Activated naive CD4-positive, alpha-beta T cell treated with anti-CD3 and anti-CD28 coated beads for 36 hours (primary cell): ENCODE measurements at regions of chr5 and their contacts with region 1.

Region 1: DNA sequence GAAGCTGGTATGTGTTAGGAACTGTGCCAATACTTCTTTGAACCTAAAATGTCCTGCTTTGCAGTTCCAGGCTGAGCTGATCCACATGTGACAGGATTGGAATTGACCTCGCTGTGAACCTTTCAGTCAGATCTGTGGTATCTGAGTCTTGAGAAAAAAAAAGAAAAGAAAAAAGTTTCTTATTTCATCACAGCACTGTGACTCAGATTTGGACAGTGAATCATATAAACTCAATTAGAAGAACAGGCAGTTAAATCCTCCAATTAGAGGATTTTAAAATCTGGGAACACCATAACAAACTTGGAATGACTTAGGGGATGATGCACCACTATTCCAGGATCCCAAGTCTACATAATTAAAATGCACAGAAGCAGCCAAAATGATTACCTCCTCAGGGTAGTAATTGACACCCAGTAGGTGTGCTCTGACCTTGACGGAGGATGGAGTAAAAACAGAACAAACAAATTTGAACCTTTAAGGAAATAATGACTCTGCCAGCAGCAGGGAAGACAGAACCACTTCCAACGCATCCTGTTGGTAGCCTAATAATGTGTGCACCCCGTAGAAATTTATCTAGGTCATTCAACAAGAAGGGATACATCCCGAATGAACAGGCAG is 57.8 kb upstream of the RAI14 start:
- DNase-seq: peak; percentile 32
- H3K4me3 Mint-ChIP-seq: no peak overlapping the region
- H3K27ac Mint-ChIP-seq: no peak overlapping the region
- H3K4me1 Mint-ChIP-seq: peaks cover 12% of the 10 kb centered on the region
- H3K27me3 Mint-ChIP-seq: peaks cover 9% of the 10 kb centered on the region

Region 2: DNA sequence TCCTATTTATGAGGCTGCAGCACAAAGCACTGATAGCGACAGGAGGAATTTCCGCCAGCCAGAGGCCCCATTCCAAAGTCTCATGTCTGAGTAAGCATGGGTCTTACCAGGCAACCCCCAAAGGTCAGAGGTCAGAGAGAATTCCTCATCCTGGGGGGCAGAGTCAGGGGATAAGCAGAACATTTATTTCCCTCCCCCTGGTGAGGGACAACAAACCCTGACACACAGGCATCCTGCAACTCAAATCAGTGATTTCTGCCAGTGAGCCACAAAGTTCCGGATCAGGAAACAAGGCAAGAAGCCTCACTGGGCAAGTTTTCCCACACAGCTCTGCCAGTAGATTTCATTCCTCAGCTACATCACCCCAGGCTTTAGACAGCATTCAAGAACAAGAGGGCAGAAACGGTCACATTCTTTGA is 743.5 kb before region 1 on chr5:
- CTCF ChIA-PET with region 1: no interaction called
- intact Hi-C with region 1: no loop called
- DNase-seq: no peak
- H3K4me3 Mint-ChIP-seq: no peak overlapping the region
- H3K27ac Mint-ChIP-seq: no peak overlapping the region
- H3K4me1 Mint-ChIP-seq: peaks cover 32% of the 10 kb centered on the region
- H3K27me3 Mint-ChIP-seq: no peaks in the 10 kb centered on the region

Region 3: GRCh38 chr5:34551911-34552433 is 46.3 kb before region 1 on chr5:
- CTCF ChIA-PET with region 1: no interaction called
- intact Hi-C with region 1: no loop called
- DNase-seq: no peak
- H3K4me3 Mint-ChIP-seq: no peak overlapping the region
- H3K27ac Mint-ChIP-seq: no peak overlapping the region
- H3K4me1 Mint-ChIP-seq: no peaks in the 10 kb centered on the region
- H3K27me3 Mint-ChIP-seq: peaks cover 30% of the 10 kb centered on the region

Region 4: GRCh38 chr5:34621277-34622097 is 23.2 kb after region 1 on chr5:
- CTCF ChIA-PET with region 1: interaction called, 8 read pairs
- intact Hi-C with region 1: loop called (anchors 1 kb)
- DNase-seq: no peak
- H3K4me3 Mint-ChIP-seq: no peak overlapping the region
- H3K27ac Mint-ChIP-seq: no peak overlapping the region
- H3K4me1 Mint-ChIP-seq: peaks cover 41% of the 10 kb centered on the region
- H3K27me3 Mint-ChIP-seq: peaks cover 14% of the 10 kb centered on the region

Region 5: DNA sequence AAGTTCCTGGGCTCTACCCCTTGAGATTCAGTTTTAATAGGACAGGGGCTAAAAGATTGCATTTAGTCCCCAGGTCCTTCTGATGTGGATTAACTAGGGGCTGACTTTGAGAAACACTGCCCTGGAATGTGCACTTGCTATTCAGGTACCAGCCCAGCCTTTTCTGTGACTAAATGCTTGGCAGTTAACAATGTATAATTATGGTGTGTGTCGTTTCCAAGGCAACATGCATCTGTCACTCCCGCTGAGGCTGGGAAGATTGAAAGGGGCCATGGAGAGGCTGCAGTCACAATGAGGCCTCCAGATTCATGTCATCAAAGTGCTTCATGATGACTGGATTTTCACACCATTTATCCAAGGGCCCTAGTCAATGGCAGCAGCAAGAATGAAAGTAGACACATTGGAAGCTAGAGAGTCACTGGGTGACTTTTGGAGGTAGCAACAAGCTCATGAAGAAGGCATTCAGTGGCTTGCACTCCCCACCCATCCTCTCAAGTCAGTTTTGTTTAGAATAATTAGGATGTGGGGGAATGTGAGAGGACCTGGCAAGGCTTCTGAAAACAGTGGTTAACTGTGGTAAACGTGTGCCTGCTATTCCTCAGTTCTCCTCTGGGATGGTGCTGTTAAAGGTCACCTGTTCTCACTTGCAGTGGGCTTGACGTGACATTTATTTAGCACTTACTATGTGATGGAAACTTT is 86.1 kb after region 1 on chr5:
- CTCF ChIA-PET with region 1: no interaction called
- intact Hi-C with region 1: loop called (anchors 1 kb)
- DNase-seq: peak; percentile 54
- H3K4me3 Mint-ChIP-seq: no peak overlapping the region
- H3K27ac Mint-ChIP-seq: no peak overlapping the region
- H3K4me1 Mint-ChIP-seq: peaks cover 14% of the 10 kb centered on the region
- H3K27me3 Mint-ChIP-seq: peaks cover 5% of the 10 kb centered on the region